ENCODE measurements at regions of chr2 and their contacts with region 1.

Region 1: DNA sequence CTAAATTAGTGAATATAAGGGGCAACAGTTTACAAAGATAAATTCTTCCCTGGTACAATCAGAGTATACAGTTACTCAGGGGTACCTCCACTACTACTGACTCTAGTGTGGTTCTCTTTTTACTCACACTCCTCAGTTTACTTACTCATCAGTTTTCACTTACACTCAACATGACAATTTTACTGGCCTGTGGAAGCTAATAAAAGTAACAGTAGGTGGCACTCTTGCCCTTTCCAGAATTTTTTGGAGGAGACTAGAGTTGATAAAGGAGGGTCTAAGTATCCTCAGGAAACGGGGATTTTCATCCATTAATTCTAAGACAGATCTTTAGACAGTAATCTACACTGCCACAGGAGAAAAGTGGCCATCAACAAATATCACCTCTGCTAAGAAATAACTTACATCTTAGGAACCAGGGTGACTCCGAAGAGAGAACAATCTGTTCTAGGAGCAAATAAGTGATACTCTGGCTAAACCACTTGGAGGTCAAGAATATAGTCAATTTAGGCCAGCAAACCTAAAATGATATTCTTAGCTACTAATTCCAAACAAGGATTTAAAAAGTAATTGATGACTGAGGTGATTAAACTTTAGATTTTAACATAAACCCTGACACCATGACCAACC is 61.3 kb downstream of the ATL2 start:
- DNase-seq: peak; percentile 7
- ATAC-seq: peak; percentile 95
- H3K4me3 Mint-ChIP-seq: no peak overlapping the region
- H3K27ac Mint-ChIP-seq: no peak overlapping the region
- H3K4me1 Mint-ChIP-seq: peaks cover 7% of the 10 kb centered on the region
- H3K27me3 Mint-ChIP-seq: no peaks in the 10 kb centered on the region
- CTCF ChIP-seq: peak; percentile 77

Region 2: DNA sequence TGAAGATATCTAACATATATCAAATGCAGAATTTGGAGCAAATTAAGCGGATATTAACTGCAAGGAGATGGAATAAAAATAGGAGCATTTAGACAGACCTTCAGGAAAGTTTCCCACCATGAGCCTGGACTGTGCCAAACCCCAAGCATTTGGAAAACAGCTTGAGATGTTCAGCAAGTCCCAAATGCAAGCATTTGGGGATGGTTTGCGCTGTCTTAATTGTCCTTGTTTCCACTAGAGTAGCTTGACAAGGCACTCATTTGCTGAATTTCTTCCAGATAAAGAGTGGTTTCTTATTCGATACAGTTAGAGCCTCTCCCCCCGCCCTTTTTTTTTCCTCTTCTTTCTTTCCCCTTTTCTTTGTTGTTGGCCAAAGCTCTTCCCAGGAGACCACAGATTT is 567.3 kb before region 1 on chr2:
- CTCF ChIA-PET with region 1: no interaction called
- POLR2A ChIA-PET with region 1: no interaction called
- intact Hi-C with region 1: no loop called
- DNase-seq: no peak
- ATAC-seq: no peak
- H3K4me3 Mint-ChIP-seq: no peak overlapping the region
- H3K27ac Mint-ChIP-seq: no peak overlapping the region
- H3K4me1 Mint-ChIP-seq: no peaks in the 10 kb centered on the region
- H3K27me3 Mint-ChIP-seq: no peaks in the 10 kb centered on the region
- CTCF ChIP-seq: no peak

Region 3: DNA sequence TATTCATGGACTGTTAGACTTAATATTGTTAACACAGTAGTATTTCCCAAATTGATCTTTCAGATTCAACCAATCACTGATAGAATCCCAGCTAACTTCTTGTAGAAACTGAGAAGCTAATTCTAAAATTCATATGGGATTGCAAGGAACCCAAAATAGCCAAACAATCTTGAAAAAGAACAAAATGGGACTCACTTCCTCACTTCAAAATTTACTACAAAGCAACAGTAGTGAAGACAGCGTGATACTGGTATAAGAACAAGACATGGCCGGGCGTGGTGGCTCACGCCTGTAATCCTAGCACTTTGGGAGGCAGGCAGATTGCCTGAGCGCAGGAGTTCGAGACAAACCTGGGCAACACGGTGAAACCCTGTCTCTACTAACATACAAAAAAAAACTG is 14.9 kb after region 1 on chr2:
- CTCF ChIA-PET with region 1: interaction called, 14 read pairs
- POLR2A ChIA-PET with region 1: no interaction called
- intact Hi-C with region 1: no loop called
- DNase-seq: no peak
- ATAC-seq: no peak
- H3K4me3 Mint-ChIP-seq: no peak overlapping the region
- H3K27ac Mint-ChIP-seq: no peak overlapping the region
- H3K4me1 Mint-ChIP-seq: peaks cover 25% of the 10 kb centered on the region
- H3K27me3 Mint-ChIP-seq: no peaks in the 10 kb centered on the region
- CTCF ChIP-seq: no peak

Region 4: GRCh38 chr2:38344813-38345212 is 29.0 kb after region 1 on chr2:
- CTCF ChIA-PET with region 1: no interaction called
- POLR2A ChIA-PET with region 1: no interaction called
- intact Hi-C with region 1: no loop called
- DNase-seq: no peak
- ATAC-seq: no peak
- H3K4me3 Mint-ChIP-seq: no peak overlapping the region
- H3K27ac Mint-ChIP-seq: no peak overlapping the region
- H3K4me1 Mint-ChIP-seq: peaks cover 3% of the 10 kb centered on the region
- H3K27me3 Mint-ChIP-seq: no peaks in the 10 kb centered on the region
- CTCF ChIP-seq: no peak

Region 5: GRCh38 chr2:38377050-38377828 is 61.4 kb after region 1 on chr2 and contains the start of gene ATL2:
- CTCF ChIA-PET with region 1: interaction called, 9 read pairs
- POLR2A ChIA-PET with region 1: interaction called, 3 read pairs
- intact Hi-C with region 1: loop called (anchors 5 kb)
- DNase-seq: peak; percentile 98
- ATAC-seq: peak; percentile 87
- H3K4me3 Mint-ChIP-seq: peak within 1 kb of the TSS; percentile 89
- H3K27ac Mint-ChIP-seq: peak within 1 kb of the TSS; percentile 87
- H3K4me1 Mint-ChIP-seq: peaks cover 60% of the 10 kb centered on the region
- H3K27me3 Mint-ChIP-seq: no peaks in the 10 kb centered on the region
- CTCF ChIP-seq: no peak
- total RNA-seq, gene ATL2: 52.8 to 54.5 TPM

Region 6: GRCh38 chr2:38465789-38466127 is 149.9 kb after region 1 on chr2:
- CTCF ChIA-PET with region 1: interaction called, 10 read pairs
- POLR2A ChIA-PET with region 1: no interaction called
- intact Hi-C with region 1: no loop called
- DNase-seq: peak; percentile 16
- ATAC-seq: no peak
- H3K4me3 Mint-ChIP-seq: no peak overlapping the region
- H3K27ac Mint-ChIP-seq: no peak overlapping the region
- H3K4me1 Mint-ChIP-seq: peaks cover 9% of the 10 kb centered on the region
- H3K27me3 Mint-ChIP-seq: no peaks in the 10 kb centered on the region
- CTCF ChIP-seq: peak; percentile 43

Region 7: GRCh38 chr2:38497670-38498037 is 181.8 kb after region 1 on chr2:
- CTCF ChIA-PET with region 1: no interaction called
- POLR2A ChIA-PET with region 1: no interaction called
- intact Hi-C with region 1: no loop called
- DNase-seq: no peak
- ATAC-seq: no peak
- H3K4me3 Mint-ChIP-seq: no peak overlapping the region
- H3K27ac Mint-ChIP-seq: no peak overlapping the region
- H3K4me1 Mint-ChIP-seq: peaks cover 5% of the 10 kb centered on the region
- H3K27me3 Mint-ChIP-seq: peaks cover 3% of the 10 kb centered on the region
- CTCF ChIP-seq: no peak

Region 8: GRCh38 chr2:38740851-38741731 is 425.3 kb after region 1 on chr2:
- CTCF ChIA-PET with region 1: no interaction called
- POLR2A ChIA-PET with region 1: no interaction called
- intact Hi-C with region 1: loop called (anchors 10 kb)
- DNase-seq: no peak
- ATAC-seq: no peak
- H3K4me3 Mint-ChIP-seq: no peak overlapping the region
- H3K27ac Mint-ChIP-seq: peak overlapping the region; percentile 28
- H3K4me1 Mint-ChIP-seq: peaks cover 46% of the 10 kb centered on the region
- H3K27me3 Mint-ChIP-seq: no peaks in the 10 kb centered on the region
- CTCF ChIP-seq: peak; percentile 87

Measured in activated CD8-positive, alpha-beta T cell treated with anti-CD3 and anti-CD28 coated beads for 36 hours (primary cell).